IMR-90 (cell line): ENCODE measurements at regions of chr21 and their contacts with region 1.

Region 1: DNA sequence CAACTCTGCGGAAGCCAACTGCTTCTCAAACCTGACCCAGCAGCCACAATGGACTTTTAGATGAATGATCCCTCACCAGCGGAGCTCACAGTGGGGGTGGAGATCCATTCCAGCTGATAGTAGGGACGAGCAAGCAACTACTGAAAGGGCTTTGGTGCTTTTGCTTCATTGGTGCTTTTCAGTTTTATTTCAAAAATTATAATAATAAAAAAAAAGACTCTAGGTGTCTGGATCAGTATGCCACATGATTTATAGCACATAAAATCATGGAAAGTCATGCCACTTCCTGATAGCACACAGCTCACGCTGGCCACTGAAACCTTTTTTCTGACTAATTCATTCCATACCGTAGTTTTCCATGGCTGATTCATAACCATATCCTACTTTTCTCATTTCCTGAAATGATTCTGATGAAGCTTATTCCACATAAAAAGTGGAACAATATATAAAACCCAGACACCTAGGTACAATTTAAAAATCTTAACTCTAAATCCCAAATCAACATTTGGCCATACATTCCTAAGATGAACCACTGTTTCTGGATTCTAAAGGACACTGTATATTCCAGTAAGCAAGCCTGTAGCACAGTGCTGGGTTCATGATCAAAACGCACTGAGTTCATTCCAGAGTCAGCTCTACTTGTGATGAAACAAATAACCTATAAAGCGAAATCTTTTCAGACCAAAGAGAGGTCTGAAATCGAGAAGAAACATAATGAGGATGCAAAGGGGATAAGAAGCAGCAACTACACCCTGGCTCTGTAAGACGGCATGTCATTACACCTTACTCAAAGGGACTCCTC is 41.3 kb upstream of the KCNE1 start:
- DNase-seq: peak; percentile 82
- ATAC-seq: peak; percentile 88
- H3K4me3 ChIP-seq: peak overlapping the region; percentile 29
- H3K27ac ChIP-seq: peak overlapping the region; percentile 81
- H3K4me1 ChIP-seq: peaks cover 10% of the 10 kb centered on the region
- H3K27me3 ChIP-seq: no peaks in the 10 kb centered on the region
- CTCF ChIP-seq: no peak
- POLR2A ChIP-seq: no peak
- RAD21 ChIP-seq: no peak

Region 2: GRCh38 chr21:34603002-34603709 is 49.8 kb after region 1 on chr21:
- CTCF ChIA-PET with region 1: no interaction called
- POLR2A ChIA-PET with region 1: interaction called, 20 read pairs
- dilution Hi-C with region 1: no loop called
- in situ Hi-C with region 1: no loop called
- intact Hi-C with region 1: no loop called
- DNase-seq: peak; percentile 70
- ATAC-seq: peak; percentile 99
- H3K4me3 ChIP-seq: no peak overlapping the region
- H3K27ac ChIP-seq: no peak overlapping the region
- H3K4me1 ChIP-seq: no peaks in the 10 kb centered on the region
- H3K27me3 ChIP-seq: no peaks in the 10 kb centered on the region
- CTCF ChIP-seq: peak; percentile 90
- POLR2A ChIP-seq: no peak
- RAD21 ChIP-seq: peak; percentile 96

Region 3: DNA sequence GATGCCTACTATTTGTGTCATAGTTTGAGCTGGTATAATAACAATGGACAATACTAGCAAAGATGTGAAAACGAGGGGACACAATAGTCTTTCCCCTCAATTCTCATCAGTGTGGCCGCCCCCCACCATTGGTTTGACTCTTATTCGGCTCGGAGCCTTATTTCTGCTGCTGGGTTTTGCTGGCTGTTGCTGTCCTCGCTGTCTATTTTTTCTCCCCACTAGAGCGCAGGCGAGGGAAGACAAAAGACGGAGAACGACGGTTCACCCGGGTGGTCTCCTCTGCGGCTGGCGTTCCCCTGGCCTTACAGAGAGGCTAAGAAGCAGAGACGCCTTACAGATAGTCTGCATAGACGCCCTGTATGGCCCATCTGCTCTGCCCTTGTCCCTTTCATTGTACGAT is 134.8 kb after region 1 on chr21:
- CTCF ChIA-PET with region 1: no interaction called
- POLR2A ChIA-PET with region 1: no interaction called
- dilution Hi-C with region 1: no loop called
- in situ Hi-C with region 1: no loop called
- intact Hi-C with region 1: no loop called
- DNase-seq: no peak
- ATAC-seq: no peak
- H3K4me3 ChIP-seq: no peak overlapping the region
- H3K27ac ChIP-seq: no peak overlapping the region
- H3K4me1 ChIP-seq: no peaks in the 10 kb centered on the region
- H3K27me3 ChIP-seq: peaks cover 59% of the 10 kb centered on the region
- CTCF ChIP-seq: no peak
- POLR2A ChIP-seq: no peak
- RAD21 ChIP-seq: no peak

Region 4: GRCh38 chr21:34745557-34746255 is 192.4 kb after region 1 on chr21:
- CTCF ChIA-PET with region 1: no interaction called
- POLR2A ChIA-PET with region 1: no interaction called
- dilution Hi-C with region 1: no loop called
- in situ Hi-C with region 1: no loop called
- intact Hi-C with region 1: no loop called
- DNase-seq: peak; percentile 86
- ATAC-seq: peak; percentile 99
- H3K4me3 ChIP-seq: no peak overlapping the region
- H3K27ac ChIP-seq: peak overlapping the region; percentile 3; the same call in 1 of the 2 replicates
- H3K4me1 ChIP-seq: 0 out of 2 replicates have a peak, but pooled peaks cover 4% of the 10 kb centered on the region
- H3K27me3 ChIP-seq: no peaks in the 10 kb centered on the region; the same call in 1 of the 2 replicates
- CTCF ChIP-seq: peak; percentile 98
- POLR2A ChIP-seq: peak; percentile 66
- RAD21 ChIP-seq: peak; percentile 99

Region 5: GRCh38 chr21:34807146-34807880 is 254.0 kb after region 1 on chr21:
- CTCF ChIA-PET with region 1: no interaction called
- POLR2A ChIA-PET with region 1: no interaction called
- dilution Hi-C with region 1: no loop called
- in situ Hi-C with region 1: no loop called
- intact Hi-C with region 1: no loop called
- DNase-seq: peak; percentile 97
- ATAC-seq: peak; percentile 62
- H3K4me3 ChIP-seq: no peak overlapping the region
- H3K27ac ChIP-seq: peak overlapping the region; percentile 92
- H3K4me1 ChIP-seq: peaks cover 44% of the 10 kb centered on the region
- H3K27me3 ChIP-seq: no peaks in the 10 kb centered on the region
- CTCF ChIP-seq: no peak
- POLR2A ChIP-seq: no peak; the same call in 1 of the 2 replicates
- RAD21 ChIP-seq: no peak